Heart right ventricle (tissue), 16 donors: ENCODE measurements at regions of chr3 and their contacts with region 1.

Region 1: GRCh38 chr3:81760924-81761903 is at the start of gene GBE1:
- DNase-seq: peak; percentile 92 to 93
- ATAC-seq: peak; percentile 92 to 97 (median 94)
- H3K4me3 ChIP-seq: peak within 1 kb of the TSS; percentile 48 to 82 (median 72)
- H3K27ac ChIP-seq: peak within 1 kb of the TSS; percentile 96 to 100 (median 99)
- H3K4me1 ChIP-seq: peaks cover 3 to 66% (median 56%) of the 10 kb centered on the region in 9 donors
- H3K27me3 ChIP-seq: no peaks in the 10 kb centered on the region
- CTCF ChIP-seq: peak in 7 of 9 donors; percentile 22 to 65 (median 47)
- total RNA-seq, gene GBE1: 69.9 to 153 (median 98.8) TPM

Region 2: GRCh38 chr3:81545572-81545971 is 215.6 kb before region 1 on chr3:
- intact Hi-C with region 1: no loop called
- DNase-seq: no peak
- ATAC-seq: no peak
- H3K4me3 ChIP-seq: no peak overlapping the region
- H3K27ac ChIP-seq: no peak overlapping the region
- H3K4me1 ChIP-seq: peaks cover 0 to 16% (median 0%) of the 10 kb centered on the region in 9 donors
- H3K27me3 ChIP-seq: no peaks in the 10 kb centered on the region
- CTCF ChIP-seq: no peak

Region 3: GRCh38 chr3:81666493-81667121 is 94.6 kb before region 1 on chr3:
- intact Hi-C with region 1: loop called in 4 of 10 experiments (anchors 10 kb)
- DNase-seq: no peak
- ATAC-seq: peak in 1 of 8 donors; percentile 53
- H3K4me3 ChIP-seq: no peak overlapping the region
- H3K27ac ChIP-seq: no peak overlapping the region
- H3K4me1 ChIP-seq: peaks cover 0 to 30% (median 13%) of the 10 kb centered on the region in 9 donors
- H3K27me3 ChIP-seq: no peaks in the 10 kb centered on the region
- CTCF ChIP-seq: peak; percentile 38 to 86 (median 81)

Region 4: DNA sequence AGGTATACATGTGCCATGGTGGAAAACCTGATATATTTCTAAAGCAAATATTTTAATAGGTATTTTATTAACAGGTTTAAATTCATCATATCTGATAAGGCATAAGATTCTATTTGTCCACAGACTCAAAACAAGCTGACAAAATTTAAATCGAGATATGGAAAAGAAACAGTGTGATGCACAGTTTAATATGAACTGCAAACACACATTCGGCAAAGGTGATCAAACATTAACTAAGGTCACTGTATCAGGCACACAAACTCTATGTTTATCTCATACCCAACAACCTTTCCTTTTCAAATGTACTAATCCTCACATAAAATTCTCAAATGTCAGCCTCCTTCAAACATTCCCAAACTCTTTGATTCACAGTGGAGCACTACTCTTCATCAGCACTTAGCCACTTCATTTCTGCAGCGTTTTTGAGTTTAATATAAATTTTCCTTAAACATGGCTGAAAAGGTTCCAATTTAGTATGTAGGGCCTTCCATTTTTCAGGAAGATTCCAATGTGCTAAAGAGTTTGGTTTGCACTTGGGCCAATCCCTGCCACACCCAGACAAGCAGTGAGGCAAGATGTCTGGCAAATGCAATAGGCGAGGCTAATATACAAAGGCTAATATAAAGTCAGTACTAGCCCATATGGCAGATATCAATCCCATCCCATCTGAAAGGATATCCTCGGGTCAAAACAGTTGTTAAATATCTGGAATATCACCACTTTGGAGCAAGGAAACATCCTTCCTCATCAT is 84.3 kb before region 1 on chr3:
- intact Hi-C with region 1: loop called in 1 of 10 experiments (anchors 10 kb)
- DNase-seq: no peak
- ATAC-seq: no peak
- H3K4me3 ChIP-seq: no peak overlapping the region
- H3K27ac ChIP-seq: no peak overlapping the region
- H3K4me1 ChIP-seq: no peaks in the 10 kb centered on the region
- H3K27me3 ChIP-seq: no peaks in the 10 kb centered on the region
- CTCF ChIP-seq: no peak

Region 5: GRCh38 chr3:81743096-81744025 is 17.9 kb before region 1 on chr3:
- intact Hi-C with region 1: loop called in 1 of 10 experiments (anchors 2 kb)
- DNase-seq: peak in 1 of 2 donors; percentile 46
- ATAC-seq: peak; percentile 43 to 73 (median 66)
- H3K4me3 ChIP-seq: no peak overlapping the region
- H3K27ac ChIP-seq: peak overlapping the region; percentile 9 to 87 (median 74)
- H3K4me1 ChIP-seq: peaks cover 10 to 68% (median 50%) of the 10 kb centered on the region in 9 donors
- H3K27me3 ChIP-seq: no peaks in the 10 kb centered on the region
- CTCF ChIP-seq: no peak

Region 6: GRCh38 chr3:81910244-81910852 is 149.1 kb after region 1 on chr3:
- intact Hi-C with region 1: loop called in 1 of 10 experiments (anchors 5 kb)
- DNase-seq: peak in 1 of 2 donors; percentile 16
- ATAC-seq: peak in 1 of 8 donors; percentile 39
- H3K4me3 ChIP-seq: no peak overlapping the region
- H3K27ac ChIP-seq: no peak overlapping the region
- H3K4me1 ChIP-seq: peaks cover 0 to 4% (median 0%) of the 10 kb centered on the region in 9 donors
- H3K27me3 ChIP-seq: no peaks in the 10 kb centered on the region
- CTCF ChIP-seq: peak; percentile 72 to 84 (median 77)

Region 7: DNA sequence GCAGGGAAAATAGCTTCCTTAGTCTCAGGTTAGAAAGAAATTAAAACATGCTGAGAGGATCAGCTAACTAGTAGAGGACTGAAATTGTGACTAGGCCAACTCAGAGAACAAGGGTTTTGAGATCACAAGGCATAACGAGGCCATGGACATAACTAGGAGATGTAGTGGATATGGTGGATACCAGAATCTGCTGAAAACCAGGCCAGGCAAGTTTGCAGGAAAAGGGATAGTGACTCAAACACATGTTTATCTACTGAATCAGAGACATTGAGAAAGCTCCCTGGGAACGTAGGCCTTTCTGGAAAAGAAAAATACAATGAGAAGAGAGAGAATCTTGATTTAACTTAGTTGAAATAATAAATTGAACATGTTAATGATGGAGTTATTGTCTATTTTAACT is 326.7 kb after region 1 on chr3:
- intact Hi-C with region 1: loop called in 1 of 10 experiments (anchors 10 kb)
- DNase-seq: no peak
- ATAC-seq: no peak
- H3K4me3 ChIP-seq: no peak overlapping the region
- H3K27ac ChIP-seq: peak overlapping the region in 1 of 10 donors; percentile 23
- H3K4me1 ChIP-seq: peaks cover 0 to 21% (median 8%) of the 10 kb centered on the region in 9 donors
- H3K27me3 ChIP-seq: no peaks in the 10 kb centered on the region
- CTCF ChIP-seq: no peak